ENCODE measurements at regions of chr2 and their contacts with region 1.

Region 1: GRCh38 chr2:108960006-108960405 is 29.0 kb downstream of the EDAR start:
- DNase-seq: no peak
- H3K4me3 ChIP-seq: no peak overlapping the region
- H3K27ac ChIP-seq: no peak overlapping the region
- H3K4me1 ChIP-seq: peaks cover 0 to 10% (median 1%) of the 10 kb centered on the region in 4 experiments; a peak in 3 of 7 replicates
- H3K27me3 ChIP-seq: no peaks in the 10 kb centered on the region
- CTCF ChIP-seq: peak in 2 of 3 experiments; percentile 1 to 33; a peak in 2 of 4 replicates
- EP300 ChIP-seq: no peak
- POLR2A ChIP-seq: no peak
- RAD21 ChIP-seq: peak in 1 of 2 experiments; percentile 15; a peak in 1 of 4 replicates

Region 2: DNA sequence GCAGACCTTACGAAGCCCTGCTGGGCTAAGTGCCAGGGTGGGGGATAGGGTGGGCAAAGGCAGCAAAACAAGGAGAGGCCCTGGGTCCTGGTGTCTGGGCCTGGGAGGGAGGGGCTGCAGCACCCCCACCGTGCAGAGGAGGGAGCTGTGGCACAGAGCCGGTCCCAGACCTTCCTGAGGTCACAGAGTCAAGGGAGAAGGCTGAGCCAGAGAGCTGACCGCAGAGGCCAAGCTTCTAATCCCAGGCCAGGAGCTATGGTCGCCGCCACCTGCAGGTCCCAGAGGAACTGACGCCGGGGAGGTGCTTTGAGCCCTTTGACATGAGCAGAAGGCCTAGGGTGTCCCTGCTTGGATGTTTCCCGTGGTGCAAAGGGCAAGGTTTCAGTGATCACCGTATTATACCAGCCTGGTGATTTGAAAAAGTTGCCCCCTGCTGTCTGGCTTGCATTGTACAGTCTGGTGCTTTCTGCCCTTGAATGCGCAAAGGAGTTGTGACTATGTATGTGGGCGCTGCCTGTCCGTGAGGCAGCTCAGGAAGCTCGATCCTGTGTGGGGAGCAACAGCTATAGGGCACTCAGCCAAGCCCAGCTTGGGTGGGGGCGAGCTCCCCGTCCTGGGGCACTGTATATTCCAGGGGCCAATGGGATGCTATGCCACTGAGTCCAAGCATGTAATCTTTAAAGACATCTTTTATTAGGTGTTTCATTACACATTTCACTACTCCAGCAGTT is 15.2 kb before region 1 on chr2:
- CTCF ChIA-PET with region 1: interaction called, 16 read pairs
- POLR2A ChIA-PET with region 1: no interaction called
- DNase-seq: no peak
- H3K4me3 ChIP-seq: no peak overlapping the region
- H3K27ac ChIP-seq: no peak overlapping the region
- H3K4me1 ChIP-seq: no peaks in the 10 kb centered on the region
- H3K27me3 ChIP-seq: no peaks in the 10 kb centered on the region
- CTCF ChIP-seq: peak; percentile 23 to 63 (median 40)
- EP300 ChIP-seq: no peak
- POLR2A ChIP-seq: no peak
- RAD21 ChIP-seq: peak; percentile 40 to 44; a peak in 3 of 4 replicates

Region 3: DNA sequence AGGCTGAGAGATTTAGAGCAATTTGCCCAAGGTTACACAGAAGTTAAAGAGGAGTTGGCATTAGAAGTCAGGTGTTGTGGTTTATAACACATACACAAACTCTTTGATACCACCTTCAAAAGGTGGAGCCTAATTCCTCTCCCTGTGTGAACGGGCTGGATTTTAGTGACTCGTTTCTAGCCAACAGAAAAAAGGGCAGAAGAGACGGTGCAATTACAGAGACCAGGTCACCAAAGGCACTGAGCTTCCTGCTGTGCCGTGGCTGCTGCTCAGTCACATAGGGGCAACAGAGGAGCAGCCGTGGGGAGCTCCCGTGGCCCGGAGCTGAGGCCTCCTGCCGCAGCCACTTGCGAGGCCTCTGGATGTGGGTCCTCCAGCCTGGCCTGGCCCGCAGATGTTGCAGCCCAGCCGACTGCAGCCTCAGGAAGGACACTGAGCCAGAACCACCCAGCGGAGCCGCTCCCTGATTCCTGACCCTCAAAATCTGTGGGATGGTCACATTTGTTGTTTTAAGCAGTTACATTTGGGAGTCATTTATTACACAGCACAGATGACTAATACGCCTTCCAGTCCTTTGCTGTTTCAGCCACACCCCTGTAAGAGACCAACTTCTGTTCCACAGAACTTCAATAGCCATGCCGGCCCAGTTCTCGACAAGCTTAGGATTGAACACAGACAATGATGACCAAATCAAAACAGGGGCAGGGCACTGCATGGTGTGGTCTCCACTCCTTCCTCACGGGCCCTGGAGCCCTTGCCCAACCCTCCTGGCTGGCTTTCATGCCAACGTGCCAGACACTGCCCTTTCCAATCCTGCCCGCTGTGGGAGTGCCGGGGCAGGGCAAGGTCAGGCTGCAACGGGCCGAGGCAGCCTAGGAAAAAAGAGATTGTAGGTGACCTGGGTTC is 11.9 kb after region 1 on chr2:
- CTCF ChIA-PET with region 1: interaction called, 34 read pairs
- POLR2A ChIA-PET with region 1: no interaction called
- DNase-seq: no peak
- H3K4me3 ChIP-seq: no peak overlapping the region
- H3K27ac ChIP-seq: no peak overlapping the region
- H3K4me1 ChIP-seq: no peaks in the 10 kb centered on the region; a peak in 1 of 7 replicates
- H3K27me3 ChIP-seq: no peaks in the 10 kb centered on the region
- CTCF ChIP-seq: no peak
- EP300 ChIP-seq: no peak
- POLR2A ChIP-seq: no peak
- RAD21 ChIP-seq: no peak

Region 4: GRCh38 chr2:109020217-109020637 is 60.2 kb after region 1 on chr2:
- CTCF ChIA-PET with region 1: no interaction called
- POLR2A ChIA-PET with region 1: no interaction called
- DNase-seq: no peak
- H3K4me3 ChIP-seq: peak overlapping the region in 1 of 4 experiments; percentile 10; a peak in 1 of 8 replicates
- H3K27ac ChIP-seq: no peak overlapping the region
- H3K4me1 ChIP-seq: peaks cover 2 to 13% (median 8%) of the 10 kb centered on the region in 4 experiments
- H3K27me3 ChIP-seq: peaks cover 0 to 2% (median 0%) of the 10 kb centered on the region in 4 experiments; a peak in 4 of 7 replicates
- CTCF ChIP-seq: no peak
- EP300 ChIP-seq: no peak
- POLR2A ChIP-seq: no peak
- RAD21 ChIP-seq: no peak

Measured in H1 (cell line).